Breast epithelium (tissue), 4 donors: ENCODE measurements at regions of chr10 and their contacts with region 1.

Region 1: DNA sequence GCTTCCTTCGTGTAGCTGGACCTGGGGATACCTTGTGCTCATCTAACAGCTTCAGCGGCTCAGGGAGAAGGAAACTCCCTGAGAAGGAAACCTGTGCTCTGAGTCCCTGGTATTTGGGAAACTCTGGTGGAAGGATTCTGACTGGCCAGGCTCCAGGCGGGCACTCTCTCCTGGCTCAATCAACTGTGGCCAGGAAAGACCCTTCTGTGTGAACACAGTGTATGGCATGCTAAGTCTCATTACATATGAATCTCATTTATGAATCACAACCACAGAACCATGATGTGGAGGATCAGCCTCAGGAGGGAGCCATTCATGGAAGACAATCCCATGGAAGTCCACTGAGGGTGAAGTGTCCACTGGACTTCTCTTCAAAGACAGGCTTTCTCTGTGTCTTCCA is 20.9 kb downstream of the NPS start:
- DNase-seq: no peak
- H3K4me3 ChIP-seq: no peak overlapping the region
- H3K27ac ChIP-seq: no peak overlapping the region
- H3K4me1 ChIP-seq: no peaks in the 10 kb centered on the region
- H3K27me3 ChIP-seq: no peaks in the 10 kb centered on the region
- CTCF ChIP-seq: no peak
- POLR2A ChIP-seq: no peak

Region 2: GRCh38 chr10:127071126-127071525 is 498.9 kb before region 1 on chr10:
- intact Hi-C with region 1: loop called (anchors 5 kb)
- DNase-seq: no peak
- H3K4me3 ChIP-seq: no peak overlapping the region
- H3K27ac ChIP-seq: no peak overlapping the region
- H3K4me1 ChIP-seq: no peaks in the 10 kb centered on the region
- H3K27me3 ChIP-seq: no peaks in the 10 kb centered on the region
- CTCF ChIP-seq: no peak
- POLR2A ChIP-seq: no peak

Region 3: DNA sequence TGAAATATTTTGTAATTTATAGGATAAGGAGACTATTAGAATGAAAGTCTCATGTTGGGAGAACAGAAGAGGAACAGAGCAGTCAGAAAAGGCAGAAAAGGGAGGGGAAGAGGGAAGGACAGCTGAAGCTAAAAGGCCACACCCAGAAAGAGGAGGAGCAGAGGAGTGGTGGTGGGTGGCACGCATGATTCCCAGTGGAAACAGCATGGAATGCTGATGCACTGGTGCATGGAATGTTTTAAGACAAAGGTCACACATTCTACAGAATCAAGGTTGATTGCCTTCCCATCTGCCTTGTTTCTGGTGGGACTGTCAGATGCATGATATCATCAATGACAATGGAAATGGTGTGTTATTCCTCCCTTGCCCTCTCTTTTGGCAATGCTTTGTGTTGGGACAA is 841.6 kb after region 1 on chr10:
- intact Hi-C with region 1: loop called (anchors 5 kb)
- DNase-seq: no peak
- H3K4me3 ChIP-seq: no peak overlapping the region
- H3K27ac ChIP-seq: no peak overlapping the region
- H3K4me1 ChIP-seq: no peaks in the 10 kb centered on the region
- H3K27me3 ChIP-seq: no peaks in the 10 kb centered on the region
- CTCF ChIP-seq: no peak
- POLR2A ChIP-seq: no peak